ENCODE measurements at regions of chr22 and their contacts with region 1.

Region 1: DNA sequence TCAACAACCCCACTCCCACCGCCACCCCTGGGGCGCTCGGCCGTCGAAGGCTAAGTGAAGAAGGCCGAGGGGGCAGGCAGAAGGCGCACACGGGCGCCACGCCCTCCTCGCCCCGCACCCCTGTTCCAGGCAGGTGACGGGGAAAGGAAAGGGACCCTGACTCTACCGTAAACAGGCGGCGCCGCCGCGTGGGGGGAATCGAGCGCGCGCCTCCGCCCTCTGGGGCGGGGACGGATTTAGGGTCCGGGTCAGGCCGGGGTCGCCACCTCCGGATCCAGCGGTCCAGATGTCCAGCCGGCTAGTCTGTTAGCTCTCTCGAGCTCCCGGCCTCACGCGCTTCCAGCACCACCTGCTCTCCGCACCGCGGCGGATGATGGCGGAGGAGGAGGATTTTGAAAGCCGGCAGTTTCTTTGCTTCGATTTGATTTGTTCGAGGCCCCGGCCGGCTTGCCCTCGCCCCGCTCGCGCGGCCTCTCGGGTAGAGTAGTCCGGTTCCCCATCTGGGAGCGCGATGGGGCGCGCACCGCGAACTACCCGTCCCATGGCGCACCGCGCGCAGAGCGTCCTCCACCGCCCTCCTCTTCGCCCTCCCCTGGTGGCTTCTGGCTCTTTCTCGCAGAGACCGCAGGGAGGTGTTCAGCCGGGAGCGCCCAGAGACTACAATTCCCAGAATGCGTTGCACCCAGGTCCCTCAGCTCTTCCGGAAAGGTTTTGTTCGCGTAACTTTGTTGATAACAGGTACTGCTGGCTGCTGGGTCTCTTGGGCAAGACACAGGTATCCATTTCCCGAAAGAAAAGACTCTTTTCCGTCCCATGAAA is at the start of gene RANGAP1:
- DNase-seq: peak; percentile 99
- H3K4me3 Mint-ChIP-seq: peak within 1 kb of the TSS; percentile 98
- H3K27ac Mint-ChIP-seq: peak within 1 kb of the TSS; percentile 99
- H3K4me1 Mint-ChIP-seq: peaks cover 25% of the 10 kb centered on the region
- H3K27me3 Mint-ChIP-seq: no peaks in the 10 kb centered on the region
- total RNA-seq, gene RANGAP1: 154 to 156 TPM

Region 2: DNA sequence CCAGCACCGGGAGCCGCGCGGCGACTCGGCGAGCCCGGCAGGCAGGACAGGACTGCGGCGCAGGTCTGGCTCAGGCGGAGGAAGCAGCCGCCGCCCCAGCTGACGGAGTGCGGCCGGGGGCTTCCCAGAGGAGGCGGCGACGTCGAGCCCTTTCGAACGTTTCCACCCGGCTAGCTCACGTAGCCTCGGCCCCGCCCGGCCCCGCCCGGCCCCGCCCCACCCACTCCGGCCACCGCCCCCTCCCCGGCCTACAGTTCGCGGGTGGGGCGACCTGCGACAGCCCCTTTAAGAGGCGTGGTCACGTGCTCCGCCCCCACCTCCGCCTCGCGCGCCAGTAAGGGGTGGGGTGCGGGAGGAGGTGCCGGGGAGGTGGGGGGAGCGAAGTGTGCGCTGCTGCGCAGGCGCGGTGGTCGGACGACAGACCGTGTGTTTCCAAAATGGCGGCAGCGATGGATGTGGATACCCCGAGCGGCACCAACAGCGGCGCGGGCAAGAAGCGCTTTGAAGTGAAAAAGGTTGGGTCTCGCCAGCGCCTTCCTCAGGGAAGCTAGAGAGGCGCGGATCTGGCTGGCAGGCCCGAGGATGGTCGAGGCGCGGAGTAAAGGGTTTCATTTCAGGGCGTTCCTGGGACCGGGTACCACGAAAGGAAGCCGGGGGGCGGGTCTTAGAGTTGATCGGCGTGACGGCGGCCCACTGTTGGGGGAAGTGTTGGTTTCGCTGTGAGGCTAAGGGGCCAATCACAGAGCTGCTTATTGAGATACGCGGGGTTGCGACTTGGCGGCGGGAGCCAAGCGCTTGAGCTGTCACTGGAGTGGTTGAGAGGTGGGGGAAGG is 334.9 kb before region 1 on chr22 and contains the start of gene RBX1:
- CTCF ChIA-PET with region 1: no interaction called
- POLR2A ChIA-PET with region 1: interaction called, 11 read pairs
- intact Hi-C with region 1: no loop called
- DNase-seq: peak; percentile 99
- H3K4me3 Mint-ChIP-seq: peak within 1 kb of the TSS; percentile 99
- H3K27ac Mint-ChIP-seq: peak within 1 kb of the TSS; percentile 99
- H3K4me1 Mint-ChIP-seq: peaks cover 30% of the 10 kb centered on the region
- H3K27me3 Mint-ChIP-seq: no peaks in the 10 kb centered on the region
- total RNA-seq, gene RBX1: 96.9 to 99.4 TPM

Region 3: DNA sequence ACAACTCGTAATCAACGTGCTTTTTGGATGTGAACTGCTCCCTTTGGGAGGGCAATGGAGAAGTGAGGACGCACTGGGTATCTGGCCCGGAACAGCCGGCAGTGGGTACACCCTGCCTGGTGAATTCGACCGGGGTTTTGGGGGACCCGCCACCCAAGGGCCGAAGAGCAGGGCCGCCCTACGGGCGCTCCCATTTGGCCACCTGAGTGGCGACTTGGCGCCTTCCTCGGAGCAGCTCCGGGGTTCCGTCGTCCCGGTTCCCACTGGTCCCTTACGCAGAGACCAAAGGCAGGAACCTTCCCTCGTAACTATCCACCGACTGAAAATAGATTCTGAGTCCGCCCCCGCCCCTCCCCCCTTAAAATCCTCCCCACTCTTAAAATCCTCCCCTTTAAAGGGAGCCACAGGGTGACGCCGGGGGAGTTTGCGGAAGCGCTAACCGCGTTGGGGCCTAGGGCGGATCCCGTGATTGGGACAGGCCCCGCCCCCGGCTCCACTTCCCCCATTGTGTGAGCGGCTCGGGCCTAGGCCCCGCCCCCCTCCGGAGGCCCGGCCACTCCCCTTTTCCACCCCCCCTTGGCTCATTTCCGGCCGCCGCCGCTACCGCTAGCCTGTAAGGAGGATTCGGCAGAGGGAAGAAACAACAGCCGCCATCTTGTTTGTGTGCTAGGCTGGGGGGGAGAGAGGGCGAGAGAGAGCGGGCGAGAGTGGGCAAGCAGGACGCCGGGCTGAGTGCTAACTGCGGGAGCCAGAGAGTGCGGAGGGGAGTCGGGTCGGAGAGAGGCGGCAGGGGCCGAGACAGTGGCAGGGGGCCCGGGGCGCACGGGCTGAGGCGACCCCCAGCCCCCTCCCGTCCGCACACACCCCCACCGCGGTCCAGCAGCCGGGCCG is 194.7 kb before region 1 on chr22:
- CTCF ChIA-PET with region 1: no interaction called
- POLR2A ChIA-PET with region 1: no interaction called
- intact Hi-C with region 1: loop called (anchors 1 kb)
- DNase-seq: peak; percentile 100
- H3K4me3 Mint-ChIP-seq: peak overlapping the region; percentile 93
- H3K27ac Mint-ChIP-seq: peak overlapping the region; percentile 98
- H3K4me1 Mint-ChIP-seq: peaks cover 25% of the 10 kb centered on the region
- H3K27me3 Mint-ChIP-seq: no peaks in the 10 kb centered on the region

Region 4: GRCh38 chr22:41301105-41302020 is 15.3 kb after region 1 on chr22 and contains the start of gene ZC3H7B:
- CTCF ChIA-PET with region 1: interaction called, 24 read pairs
- POLR2A ChIA-PET with region 1: interaction called, 33 read pairs
- intact Hi-C with region 1: loop called (anchors 1 kb)
- DNase-seq: peak; percentile 90
- H3K4me3 Mint-ChIP-seq: peak within 1 kb of the TSS; percentile 72
- H3K27ac Mint-ChIP-seq: peak within 1 kb of the TSS; percentile 71
- H3K4me1 Mint-ChIP-seq: peaks cover 32% of the 10 kb centered on the region
- H3K27me3 Mint-ChIP-seq: no peaks in the 10 kb centered on the region
- total RNA-seq, gene ZC3H7B: 37.7 to 39.3 TPM

Region 5: GRCh38 chr22:41468381-41469217 is 182.6 kb after region 1 on chr22 and contains the starts of genes ACO2 and PHF5A:
- CTCF ChIA-PET with region 1: interaction called, 3 read pairs
- POLR2A ChIA-PET with region 1: interaction called, 5 read pairs
- intact Hi-C with region 1: loop called (anchors 2 kb)
- DNase-seq: peak; percentile 99
- H3K4me3 Mint-ChIP-seq: peak within 1 kb of the TSS; percentile 93
- H3K27ac Mint-ChIP-seq: peak within 1 kb of the TSS; percentile 99
- H3K4me1 Mint-ChIP-seq: peaks cover 51% of the 10 kb centered on the region
- H3K27me3 Mint-ChIP-seq: no peaks in the 10 kb centered on the region
- total RNA-seq, gene ACO2: 103 to 105 TPM
- total RNA-seq, gene PHF5A: 55.4 to 60.0 TPM

Region 6: GRCh38 chr22:41857155-41857859 is 571.3 kb after region 1 on chr22:
- CTCF ChIA-PET with region 1: no interaction called
- POLR2A ChIA-PET with region 1: no interaction called
- intact Hi-C with region 1: loop called (anchors 10 kb)
- DNase-seq: peak; percentile 89
- H3K4me3 Mint-ChIP-seq: peak overlapping the region; percentile 28
- H3K27ac Mint-ChIP-seq: peak overlapping the region; percentile 95
- H3K4me1 Mint-ChIP-seq: peaks cover 80% of the 10 kb centered on the region
- H3K27me3 Mint-ChIP-seq: no peaks in the 10 kb centered on the region

Measured in activated CD4-positive, alpha-beta memory T cell treated with anti-CD3 and anti-CD28 coated beads for 36 hours (primary cell).